ENCODE measurements at regions of chr5 and their contacts with region 1.

Region 1: DNA sequence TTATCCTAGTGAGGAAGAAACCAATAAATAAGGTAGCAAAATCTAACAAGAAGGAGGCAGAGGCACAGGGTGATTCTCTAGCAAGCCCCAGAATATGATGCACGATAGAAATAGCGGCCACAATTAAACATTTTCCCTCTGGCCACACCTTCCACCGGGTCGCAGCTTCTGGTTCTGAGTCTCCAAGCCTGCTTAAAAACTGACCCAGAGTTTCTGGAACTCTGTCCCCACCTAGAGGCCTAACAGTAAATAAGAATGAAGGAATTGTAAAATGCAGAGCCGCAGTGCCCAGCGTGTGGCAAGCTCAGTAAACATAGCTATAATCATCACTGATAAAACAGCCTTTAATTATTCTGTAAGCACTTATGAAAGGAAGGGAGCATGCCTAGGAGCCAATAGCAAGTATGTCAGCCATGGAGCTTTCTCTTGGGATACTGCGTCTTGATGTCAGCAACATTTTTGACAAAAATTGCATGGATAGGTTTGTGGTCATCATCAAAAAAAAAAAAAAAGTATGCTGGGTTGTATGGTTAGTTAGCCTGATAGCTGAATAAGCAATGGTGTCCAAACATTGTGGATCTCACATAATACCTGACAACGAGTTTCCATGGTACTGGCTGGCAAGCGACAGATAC is 465.5 kb downstream of the DNAH5 start:
- DNase-seq: no peak
- ATAC-seq: peak; percentile 63
- H3K4me3 ChIP-seq: no peak overlapping the region
- H3K27ac ChIP-seq: no peak overlapping the region
- H3K4me1 ChIP-seq: no peaks in the 10 kb centered on the region
- H3K27me3 ChIP-seq: no peaks in the 10 kb centered on the region
- CTCF ChIP-seq: peak; percentile 34 to 44 (median 35); a peak in 3 of 6 replicates
- EP300 ChIP-seq: no peak
- POLR2A ChIP-seq: no peak
- RAD21 ChIP-seq: peak; percentile 63

Region 2: GRCh38 chr5:12292610-12293204 is 1186.2 kb before region 1 on chr5:
- CTCF ChIA-PET with region 1: no interaction called
- POLR2A ChIA-PET with region 1: no interaction called
- RAD21 ChIA-PET with region 1: no interaction called
- SMC1A ChIA-PET with region 1: no interaction called
- in situ Hi-C with region 1: no loop called
- intact Hi-C with region 1: loop called (anchors 5 kb)
- DNase-seq: no peak
- ATAC-seq: peak; percentile 35; the same call in 1 of the 3 replicates
- H3K4me3 ChIP-seq: no peak overlapping the region
- H3K27ac ChIP-seq: no peak overlapping the region
- H3K4me1 ChIP-seq: no peaks in the 10 kb centered on the region
- H3K27me3 ChIP-seq: no peaks in the 10 kb centered on the region
- CTCF ChIP-seq: peak in 1 of 3 experiments; percentile 18; a peak in 1 of 6 replicates
- EP300 ChIP-seq: no peak
- POLR2A ChIP-seq: no peak
- RAD21 ChIP-seq: 0 out of 2 replicates have a peak, but pooled peaks have one; percentile 11

Region 3: DNA sequence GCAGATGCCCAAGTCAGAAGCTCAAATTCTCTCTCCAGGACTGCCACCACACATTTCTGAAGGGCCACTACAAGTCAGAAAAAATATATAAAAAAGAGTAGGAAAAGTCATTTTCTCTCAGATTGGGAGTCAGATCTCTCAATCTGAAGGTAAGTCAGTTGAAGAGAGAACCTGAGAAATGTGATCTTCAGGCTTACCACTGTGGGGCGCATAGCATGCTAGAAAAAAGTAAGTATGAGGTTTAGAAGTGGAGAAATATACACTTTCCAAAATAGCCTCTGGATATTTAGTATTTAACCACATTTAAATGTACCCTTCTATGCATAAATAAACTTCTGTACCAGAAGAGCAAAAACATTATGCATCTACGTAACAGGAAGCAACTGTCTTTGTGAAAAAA is 774.0 kb before region 1 on chr5:
- CTCF ChIA-PET with region 1: interaction called, 3 read pairs
- POLR2A ChIA-PET with region 1: no interaction called
- RAD21 ChIA-PET with region 1: no interaction called
- SMC1A ChIA-PET with region 1: no interaction called
- in situ Hi-C with region 1: no loop called
- intact Hi-C with region 1: loop called (anchors 5 kb)
- DNase-seq: no peak
- ATAC-seq: no peak
- H3K4me3 ChIP-seq: no peak overlapping the region
- H3K27ac ChIP-seq: no peak overlapping the region
- H3K4me1 ChIP-seq: no peaks in the 10 kb centered on the region
- H3K27me3 ChIP-seq: no peaks in the 10 kb centered on the region
- CTCF ChIP-seq: no peak; a peak in 1 of 6 replicates
- EP300 ChIP-seq: no peak
- POLR2A ChIP-seq: no peak
- RAD21 ChIP-seq: no peak

Region 4: GRCh38 chr5:13218518-13218917 is 260.4 kb before region 1 on chr5:
- CTCF ChIA-PET with region 1: no interaction called
- POLR2A ChIA-PET with region 1: no interaction called
- RAD21 ChIA-PET with region 1: no interaction called
- SMC1A ChIA-PET with region 1: no interaction called
- in situ Hi-C with region 1: no loop called
- intact Hi-C with region 1: no loop called
- DNase-seq: no peak
- ATAC-seq: no peak
- H3K4me3 ChIP-seq: no peak overlapping the region
- H3K27ac ChIP-seq: no peak overlapping the region
- H3K4me1 ChIP-seq: no peaks in the 10 kb centered on the region
- H3K27me3 ChIP-seq: no peaks in the 10 kb centered on the region
- CTCF ChIP-seq: 0 out of 6 replicates have a peak, but pooled peaks of 1 of the 3 experiments have one; percentile 1
- EP300 ChIP-seq: no peak
- POLR2A ChIP-seq: no peak
- RAD21 ChIP-seq: no peak

Region 5: GRCh38 chr5:13503017-13503416 is 24.1 kb after region 1 on chr5:
- CTCF ChIA-PET with region 1: no interaction called
- POLR2A ChIA-PET with region 1: no interaction called
- RAD21 ChIA-PET with region 1: no interaction called
- SMC1A ChIA-PET with region 1: no interaction called
- in situ Hi-C with region 1: no loop called
- intact Hi-C with region 1: no loop called
- DNase-seq: no peak
- ATAC-seq: no peak
- H3K4me3 ChIP-seq: no peak overlapping the region
- H3K27ac ChIP-seq: no peak overlapping the region
- H3K4me1 ChIP-seq: no peaks in the 10 kb centered on the region
- H3K27me3 ChIP-seq: no peaks in the 10 kb centered on the region
- CTCF ChIP-seq: no peak
- EP300 ChIP-seq: no peak
- POLR2A ChIP-seq: no peak
- RAD21 ChIP-seq: no peak

Measured in GM12878 (cell line).